Heart left ventricle (tissue), 16 donors: ENCODE measurements at regions of chr17 and their contacts with region 1.

Region 1: GRCh38 chr17:48871551-48872351 is 20.8 kb upstream of the ATP5MC1 start:
- DNase-seq: peak in 4 of 5 donors; percentile 33 to 57 (median 48)
- ATAC-seq: peak; percentile 58 to 80 (median 66)
- H3K4me3 ChIP-seq: no peak overlapping the region
- H3K27ac ChIP-seq: peak overlapping the region; percentile 56 to 85 (median 72)
- H3K4me1 ChIP-seq: peaks cover 8 to 51% (median 40%) of the 10 kb centered on the region in 12 donors
- H3K27me3 ChIP-seq: no peaks in the 10 kb centered on the region
- CTCF ChIP-seq: no peak
- POLR2A ChIP-seq: no peak

Region 2: GRCh38 chr17:48769009-48769675 is 102.6 kb before region 1 on chr17:
- intact Hi-C with region 1: no loop called
- DNase-seq: no peak
- ATAC-seq: no peak
- H3K4me3 ChIP-seq: no peak overlapping the region
- H3K27ac ChIP-seq: no peak overlapping the region
- H3K4me1 ChIP-seq: no peaks in the 10 kb centered on the region
- H3K27me3 ChIP-seq: peaks cover 0 to 47% (median 13%) of the 10 kb centered on the region in 9 donors
- CTCF ChIP-seq: no peak
- POLR2A ChIP-seq: no peak

Region 3: DNA sequence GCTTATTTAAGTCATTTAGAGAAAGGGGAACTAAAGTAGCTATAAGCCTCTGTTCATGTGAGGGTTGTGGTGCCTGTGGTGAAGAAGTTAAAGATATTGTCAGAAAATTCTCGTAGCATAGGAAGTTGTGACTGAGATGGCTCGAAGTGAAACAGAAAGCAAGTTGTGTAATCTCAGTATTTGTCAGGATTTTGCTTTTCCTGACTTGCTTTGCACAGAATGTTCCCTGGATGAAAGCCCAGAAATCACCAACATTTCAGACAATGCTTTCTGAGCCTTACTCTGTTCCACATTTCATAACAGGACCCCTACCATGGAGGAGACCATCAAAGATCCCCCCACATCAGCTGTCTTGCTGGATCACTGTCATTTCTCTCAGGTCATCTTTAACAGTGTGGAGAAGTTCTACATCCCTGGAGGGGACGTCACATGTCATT is 30.3 kb before region 1 on chr17:
- intact Hi-C with region 1: loop called in 2 of 10 experiments (anchors 2 to 5 kb)
- DNase-seq: peak in 2 of 5 donors; percentile 23 to 55
- ATAC-seq: peak; percentile 64 to 86 (median 75)
- H3K4me3 ChIP-seq: peak overlapping the region in 11 of 12 donors; percentile 2 to 52 (median 38)
- H3K27ac ChIP-seq: peak overlapping the region; percentile 86 to 95 (median 90)
- H3K4me1 ChIP-seq: peaks cover 18 to 87% (median 59%) of the 10 kb centered on the region in 12 donors
- H3K27me3 ChIP-seq: no peaks in the 10 kb centered on the region
- CTCF ChIP-seq: no peak
- POLR2A ChIP-seq: peak in 1 of 2 donors; percentile 57